Naive thymus-derived CD4-positive, alpha-beta T cell (primary cell): ENCODE measurements at regions of chr1 and their contacts with region 1.

Region 1: DNA sequence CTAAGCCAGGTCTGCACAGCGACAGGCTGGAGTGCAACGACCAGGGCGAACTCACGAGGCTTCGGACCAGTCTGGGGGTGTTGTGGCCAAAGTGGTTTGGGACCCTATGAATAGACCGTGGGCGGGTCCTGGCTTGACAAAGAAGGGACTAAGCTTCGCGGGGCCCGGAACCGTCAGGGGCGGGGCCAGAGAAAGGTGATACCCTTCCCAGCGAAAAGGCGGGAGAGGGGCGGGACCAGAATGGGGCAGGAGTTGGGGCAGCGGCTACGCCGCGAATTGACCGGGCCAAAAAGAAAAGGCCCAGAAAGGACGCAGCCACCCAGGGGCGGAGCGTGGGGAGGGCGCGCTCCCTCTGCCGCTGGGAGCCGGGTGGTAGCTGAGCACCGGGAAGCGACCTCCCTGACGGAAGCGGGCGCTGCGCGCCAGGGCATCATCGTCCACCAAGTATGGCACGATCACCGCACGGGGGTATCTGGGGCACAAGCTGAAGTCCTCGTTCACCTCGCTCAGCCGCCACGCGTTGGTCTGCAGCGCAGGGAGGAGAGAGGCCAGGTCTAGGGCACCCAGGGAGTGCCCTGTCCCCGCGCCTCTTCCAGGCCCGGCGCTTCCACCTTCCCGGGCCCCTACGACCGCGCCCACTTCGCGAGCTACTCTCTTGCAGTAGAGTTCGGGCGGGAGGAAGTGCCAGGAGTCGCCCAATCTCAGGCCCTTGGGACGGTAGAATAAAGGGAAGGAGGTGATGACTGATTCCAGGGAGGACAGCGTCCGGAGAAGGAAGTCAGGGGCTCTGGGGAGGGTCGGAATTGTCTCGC is 6.7 kb upstream of the FAM167B start:
- DNase-seq: peak in 7 of 9 donors; percentile 33 to 73 (median 57)
- ATAC-seq: peak; percentile 78
- H3K4me3 ChIP-seq: peak overlapping the region; percentile 94
- H3K4me3 Mint-ChIP-seq: peak overlapping the region; percentile 87 to 93 (median 91)
- H3K27ac ChIP-seq: peak overlapping the region; percentile 68
- H3K27ac Mint-ChIP-seq: peak overlapping the region in 8 of 9 donors; percentile 40 to 92 (median 83)
- H3K4me1 ChIP-seq: peaks cover 8 to 17% of the 10 kb centered on the region in 2 donors
- H3K4me1 Mint-ChIP-seq: peaks cover 6 to 31% (median 22%) of the 10 kb centered on the region in 7 donors
- H3K27me3 ChIP-seq: no peaks in the 10 kb centered on the region
- H3K27me3 Mint-ChIP-seq: no peaks in the 10 kb centered on the region

Region 2: GRCh38 chr1:32228771-32229170 is 11.6 kb before region 1 on chr1:
- CTCF ChIA-PET with region 1: interaction called, 5 read pairs
- POLR2A ChIA-PET with region 1: interaction called, 15 read pairs
- intact Hi-C with region 1: no loop called
- DNase-seq: no peak
- ATAC-seq: no peak
- H3K4me3 ChIP-seq: no peak overlapping the region
- H3K4me3 Mint-ChIP-seq: no peak overlapping the region
- H3K27ac ChIP-seq: no peak overlapping the region
- H3K27ac Mint-ChIP-seq: peak overlapping the region in 5 of 9 donors; percentile 14 to 73 (median 36)
- H3K4me1 ChIP-seq: peaks cover 4 to 5% of the 10 kb centered on the region in 2 donors
- H3K4me1 Mint-ChIP-seq: peaks cover 6 to 22% (median 17%) of the 10 kb centered on the region in 7 donors
- H3K27me3 ChIP-seq: no peaks in the 10 kb centered on the region
- H3K27me3 Mint-ChIP-seq: no peaks in the 10 kb centered on the region

Region 3: DNA sequence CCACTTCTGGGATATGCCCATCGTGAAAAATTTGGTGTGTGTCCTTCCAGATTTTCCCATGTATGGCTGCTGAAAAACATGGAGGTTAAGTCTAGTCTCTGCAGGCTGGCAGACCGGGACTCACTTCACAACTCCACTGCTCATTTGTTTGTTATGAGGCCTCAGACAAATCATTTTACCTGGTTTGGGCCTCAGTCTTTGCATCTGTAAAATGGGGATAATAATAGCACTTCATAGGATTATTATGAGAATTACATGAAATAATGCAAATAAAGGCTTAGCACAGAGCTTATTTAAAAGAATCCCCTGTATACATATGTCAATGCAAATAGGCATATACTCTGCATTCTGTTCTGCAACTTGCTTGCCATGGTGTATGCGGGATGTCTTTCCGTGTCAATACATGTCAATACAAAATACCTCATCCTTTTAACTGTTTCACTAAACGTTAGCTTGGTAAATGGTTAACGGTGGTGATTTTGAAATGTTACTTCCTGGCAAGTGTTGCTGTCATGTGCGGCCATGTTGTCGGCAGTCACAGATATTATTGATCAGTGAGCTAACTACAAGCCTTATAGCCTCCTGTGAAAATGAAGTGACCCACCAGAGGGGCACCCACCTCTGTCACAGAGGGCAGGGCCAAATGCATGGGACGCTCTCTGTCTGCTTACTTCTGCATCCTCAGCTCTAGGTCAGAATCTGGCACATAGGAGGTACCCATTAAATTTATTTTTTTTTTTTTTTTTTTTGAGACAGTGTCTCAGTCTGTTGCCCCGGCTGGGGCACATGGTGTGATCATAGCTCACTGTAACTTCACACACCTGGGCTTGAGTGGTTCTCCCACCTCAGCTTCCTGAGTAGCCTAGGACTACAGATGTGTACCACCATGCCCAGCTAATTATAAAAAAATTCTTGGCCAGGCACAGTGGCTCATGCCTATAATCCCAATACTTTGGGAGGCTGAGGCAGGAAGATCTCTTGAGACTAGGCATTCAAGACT is 15.0 kb after region 1 on chr1:
- CTCF ChIA-PET with region 1: interaction called, 38 read pairs
- POLR2A ChIA-PET with region 1: interaction called, 738 read pairs
- intact Hi-C with region 1: loop called (anchors 1 to 2 kb)
- DNase-seq: peak in 5 of 9 donors; percentile 50 to 68 (median 62)
- ATAC-seq: peak; percentile 31
- H3K4me3 ChIP-seq: peak overlapping the region; percentile 55
- H3K4me3 Mint-ChIP-seq: peak overlapping the region; percentile 88 to 100 (median 98)
- H3K27ac ChIP-seq: peak overlapping the region; percentile 91
- H3K27ac Mint-ChIP-seq: peak overlapping the region; percentile 90 to 99 (median 97)
- H3K4me1 ChIP-seq: peaks cover 39 to 41% of the 10 kb centered on the region in 2 donors
- H3K4me1 Mint-ChIP-seq: peaks cover 24 to 56% (median 48%) of the 10 kb centered on the region in 7 donors
- H3K27me3 ChIP-seq: no peaks in the 10 kb centered on the region
- H3K27me3 Mint-ChIP-seq: no peaks in the 10 kb centered on the region

Region 4: GRCh38 chr1:32273388-32274208 is 33.3 kb after region 1 on chr1:
- CTCF ChIA-PET with region 1: interaction called, 10 read pairs
- POLR2A ChIA-PET with region 1: interaction called, 738 read pairs
- intact Hi-C with region 1: loop called in 1 of 2 experiments (anchors 1 kb)
- DNase-seq: peak; percentile 34 to 96 (median 88)
- ATAC-seq: peak; percentile 94
- H3K4me3 ChIP-seq: peak overlapping the region; percentile 49
- H3K4me3 Mint-ChIP-seq: peak overlapping the region; percentile 74 to 91 (median 88)
- H3K27ac ChIP-seq: peak overlapping the region; percentile 79
- H3K27ac Mint-ChIP-seq: peak overlapping the region; percentile 77 to 99 (median 97)
- H3K4me1 ChIP-seq: peaks cover 42 to 69% of the 10 kb centered on the region in 2 donors
- H3K4me1 Mint-ChIP-seq: peaks cover 45 to 86% (median 62%) of the 10 kb centered on the region in 7 donors
- H3K27me3 ChIP-seq: no peaks in the 10 kb centered on the region
- H3K27me3 Mint-ChIP-seq: no peaks in the 10 kb centered on the region

Region 5: DNA sequence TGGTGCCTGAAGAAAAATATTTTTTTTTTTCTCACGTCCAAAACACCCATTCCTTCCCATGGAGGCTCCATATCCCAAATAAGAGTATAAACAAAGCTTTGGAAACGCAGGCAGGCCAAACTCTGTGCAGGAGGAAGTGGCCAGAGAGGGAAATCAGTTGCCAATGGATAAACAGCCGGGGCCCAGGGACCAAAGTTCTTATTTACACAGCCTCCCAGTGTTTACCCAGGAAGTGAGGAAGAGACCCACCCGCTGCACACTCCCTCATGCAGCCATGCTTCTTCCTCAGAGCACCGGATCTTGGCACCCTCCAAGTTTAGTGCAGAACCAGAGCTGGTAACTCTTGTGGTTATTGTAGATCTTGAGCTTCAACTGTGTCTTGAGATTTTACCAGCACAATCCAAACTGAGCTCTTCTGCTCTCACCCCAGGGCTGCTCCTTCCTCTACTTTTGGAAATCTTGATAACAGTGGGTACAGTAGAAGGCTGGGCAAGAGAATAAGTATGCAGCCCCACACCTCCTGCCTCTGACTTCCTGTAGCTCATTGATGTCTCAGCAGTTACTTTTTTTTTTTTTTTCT is 81.5 kb after region 1 on chr1:
- CTCF ChIA-PET with region 1: interaction called, 5 read pairs
- POLR2A ChIA-PET with region 1: interaction called, 20 read pairs
- intact Hi-C with region 1: no loop called
- DNase-seq: peak in 7 of 9 donors; percentile 37 to 73 (median 57)
- ATAC-seq: peak; percentile 90
- H3K4me3 ChIP-seq: peak overlapping the region; percentile 33
- H3K4me3 Mint-ChIP-seq: peak overlapping the region; percentile 58 to 85 (median 74)
- H3K27ac ChIP-seq: peak overlapping the region; percentile 58
- H3K27ac Mint-ChIP-seq: peak overlapping the region; percentile 62 to 96 (median 94)
- H3K4me1 ChIP-seq: peaks cover 33 to 46% of the 10 kb centered on the region in 2 donors
- H3K4me1 Mint-ChIP-seq: peaks cover 27 to 69% (median 47%) of the 10 kb centered on the region in 7 donors
- H3K27me3 ChIP-seq: no peaks in the 10 kb centered on the region
- H3K27me3 Mint-ChIP-seq: no peaks in the 10 kb centered on the region

Region 6: GRCh38 chr1:32372149-32372756 is 131.9 kb after region 1 on chr1:
- CTCF ChIA-PET with region 1: interaction called, 7 read pairs
- POLR2A ChIA-PET with region 1: interaction called, 3 read pairs
- intact Hi-C with region 1: loop called in 1 of 2 experiments (anchors 1 kb)
- DNase-seq: peak; percentile 22 to 78 (median 68)
- ATAC-seq: peak; percentile 88
- H3K4me3 ChIP-seq: no peak overlapping the region
- H3K4me3 Mint-ChIP-seq: peak overlapping the region in 2 of 10 donors; percentile 6 to 9
- H3K27ac ChIP-seq: peak overlapping the region; percentile 20
- H3K27ac Mint-ChIP-seq: peak overlapping the region in 7 of 9 donors; percentile 1 to 75 (median 57)
- H3K4me1 ChIP-seq: peaks cover 12% of the 10 kb centered on the region in 2 donors
- H3K4me1 Mint-ChIP-seq: peaks cover 15 to 22% (median 20%) of the 10 kb centered on the region in 7 donors
- H3K27me3 ChIP-seq: no peaks in the 10 kb centered on the region
- H3K27me3 Mint-ChIP-seq: no peaks in the 10 kb centered on the region

Region 7: GRCh38 chr1:32521165-32521564 is 280.8 kb after region 1 on chr1:
- CTCF ChIA-PET with region 1: no interaction called
- POLR2A ChIA-PET with region 1: no interaction called
- intact Hi-C with region 1: no loop called
- DNase-seq: no peak
- ATAC-seq: no peak
- H3K4me3 ChIP-seq: no peak overlapping the region
- H3K4me3 Mint-ChIP-seq: peak overlapping the region in 9 of 10 donors; percentile 48 to 83 (median 66)
- H3K27ac ChIP-seq: no peak overlapping the region
- H3K27ac Mint-ChIP-seq: no peak overlapping the region
- H3K4me1 ChIP-seq: no peaks in the 10 kb centered on the region
- H3K4me1 Mint-ChIP-seq: peaks cover 0 to 14% (median 5%) of the 10 kb centered on the region in 7 donors
- H3K27me3 ChIP-seq: no peaks in the 10 kb centered on the region
- H3K27me3 Mint-ChIP-seq: peaks cover 5 to 19% (median 8%) of the 10 kb centered on the region in 5 donors